ENCODE measurements at regions of chr14 and their contacts with region 1.

Region 1: GRCh38 chr14:32076278-32077080 is 625 bp upstream of the ARHGAP5 start:
- DNase-seq: peak; percentile 47 to 90 (median 75)
- ATAC-seq: peak; percentile 61
- H3K4me3 ChIP-seq: peak overlapping the region; percentile 77 to 96
- H3K4me3 Mint-ChIP-seq: peak overlapping the region; percentile 100
- H3K27ac ChIP-seq: peak overlapping the region; percentile 69 to 74
- H3K27ac Mint-ChIP-seq: peak overlapping the region; percentile 95
- H3K4me1 ChIP-seq: peaks cover 13% of the 10 kb centered on the region
- H3K4me1 Mint-ChIP-seq: peaks cover 36% of the 10 kb centered on the region
- H3K27me3 ChIP-seq: no peaks in the 10 kb centered on the region
- H3K27me3 Mint-ChIP-seq: no peaks in the 10 kb centered on the region
- CTCF ChIP-seq: no peak

Region 2: DNA sequence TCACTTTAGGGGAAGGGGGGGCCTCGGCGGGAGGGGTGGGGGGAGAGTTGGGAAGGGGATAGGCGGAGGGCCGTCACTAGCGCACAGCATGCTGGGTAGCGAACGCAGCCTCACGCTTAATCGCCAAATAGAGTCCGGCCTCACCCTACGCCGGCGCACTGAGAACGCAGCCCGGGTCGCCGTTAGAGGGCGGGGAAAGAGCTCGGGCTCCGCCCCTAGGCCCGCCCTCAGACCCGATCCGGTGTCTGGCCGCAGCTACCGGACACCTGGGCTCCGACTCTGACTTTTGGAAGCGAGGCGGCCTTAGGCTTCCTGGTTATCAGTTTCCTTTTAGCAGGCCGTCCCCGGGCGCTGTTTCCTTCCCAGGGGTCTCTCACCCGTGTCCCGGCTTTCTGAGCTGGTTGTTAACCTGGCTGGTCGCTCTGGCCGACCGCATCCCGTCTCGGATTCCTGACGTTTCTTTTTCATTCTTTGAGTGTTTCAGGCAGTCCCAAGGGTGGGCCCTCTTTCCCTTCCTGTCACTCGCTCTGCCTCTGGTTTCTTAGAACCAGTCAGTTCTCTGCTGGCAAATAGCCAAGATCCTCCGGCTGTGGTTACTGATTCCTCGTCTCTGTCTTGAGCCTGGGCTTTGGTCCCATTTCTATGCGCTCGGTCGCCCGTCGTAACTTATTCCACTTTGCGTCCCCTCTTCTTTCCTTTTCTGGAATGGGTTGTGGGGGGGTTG is 1049.9 kb before region 1 on chr14:
- CTCF ChIA-PET with region 1: no interaction called
- POLR2A ChIA-PET with region 1: no interaction called
- intact Hi-C with region 1: loop called in 1 of 2 experiments (anchors 5 kb)
- DNase-seq: peak; percentile 75 to 96 (median 88)
- ATAC-seq: peak; percentile 88
- H3K4me3 ChIP-seq: peak overlapping the region; percentile 77 to 99
- H3K4me3 Mint-ChIP-seq: peak overlapping the region; percentile 97
- H3K27ac ChIP-seq: peak overlapping the region; percentile 79 to 93
- H3K27ac Mint-ChIP-seq: peak overlapping the region; percentile 94
- H3K4me1 ChIP-seq: peaks cover 25% of the 10 kb centered on the region
- H3K4me1 Mint-ChIP-seq: peaks cover 47% of the 10 kb centered on the region
- H3K27me3 ChIP-seq: no peaks in the 10 kb centered on the region
- H3K27me3 Mint-ChIP-seq: no peaks in the 10 kb centered on the region
- CTCF ChIP-seq: no peak

Region 3: DNA sequence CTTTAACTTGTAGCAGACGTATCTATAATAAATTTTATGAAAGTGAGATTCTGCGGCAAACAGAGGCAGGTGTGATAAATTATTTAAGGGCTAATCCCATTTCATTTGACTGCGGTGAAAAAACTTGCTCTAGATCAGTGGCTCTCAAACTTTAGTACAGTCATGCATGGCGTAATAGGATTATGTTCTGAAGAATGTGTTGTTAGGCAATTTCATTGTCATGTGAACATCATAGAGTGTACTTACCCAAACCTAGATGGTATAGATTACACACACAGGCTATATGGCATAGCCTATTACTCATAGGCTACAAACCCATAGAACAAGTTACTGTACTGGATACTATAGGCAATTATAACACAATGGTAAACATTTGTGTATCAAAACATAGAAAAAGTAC is 739.8 kb before region 1 on chr14:
- CTCF ChIA-PET with region 1: no interaction called
- POLR2A ChIA-PET with region 1: no interaction called
- intact Hi-C with region 1: no loop called
- DNase-seq: no peak
- ATAC-seq: no peak
- H3K4me3 ChIP-seq: no peak overlapping the region
- H3K4me3 Mint-ChIP-seq: no peak overlapping the region
- H3K27ac ChIP-seq: no peak overlapping the region
- H3K27ac Mint-ChIP-seq: no peak overlapping the region
- H3K4me1 ChIP-seq: no peaks in the 10 kb centered on the region
- H3K4me1 Mint-ChIP-seq: no peaks in the 10 kb centered on the region
- H3K27me3 ChIP-seq: no peaks in the 10 kb centered on the region
- H3K27me3 Mint-ChIP-seq: no peaks in the 10 kb centered on the region
- CTCF ChIP-seq: no peak

Region 4: GRCh38 chr14:31456841-31457664 is 619.4 kb before region 1 on chr14 and contains the start of gene DTD2:
- CTCF ChIA-PET with region 1: no interaction called
- POLR2A ChIA-PET with region 1: interaction called, 4 read pairs
- intact Hi-C with region 1: loop called (anchors 1 kb)
- DNase-seq: peak; percentile 87 to 95 (median 92)
- ATAC-seq: peak; percentile 98
- H3K4me3 ChIP-seq: peak within 1 kb of the TSS; percentile 93 to 95
- H3K4me3 Mint-ChIP-seq: peak within 1 kb of the TSS; percentile 96
- H3K27ac ChIP-seq: peak within 1 kb of the TSS; percentile 78 to 85
- H3K27ac Mint-ChIP-seq: peak within 1 kb of the TSS; percentile 92
- H3K4me1 ChIP-seq: peaks cover 15% of the 10 kb centered on the region
- H3K4me1 Mint-ChIP-seq: peaks cover 42% of the 10 kb centered on the region
- H3K27me3 ChIP-seq: no peaks in the 10 kb centered on the region
- H3K27me3 Mint-ChIP-seq: peaks cover 2% of the 10 kb centered on the region
- CTCF ChIP-seq: no peak
- total RNA-seq, gene DTD2: 4.9 to 6.5 TPM

Region 5: DNA sequence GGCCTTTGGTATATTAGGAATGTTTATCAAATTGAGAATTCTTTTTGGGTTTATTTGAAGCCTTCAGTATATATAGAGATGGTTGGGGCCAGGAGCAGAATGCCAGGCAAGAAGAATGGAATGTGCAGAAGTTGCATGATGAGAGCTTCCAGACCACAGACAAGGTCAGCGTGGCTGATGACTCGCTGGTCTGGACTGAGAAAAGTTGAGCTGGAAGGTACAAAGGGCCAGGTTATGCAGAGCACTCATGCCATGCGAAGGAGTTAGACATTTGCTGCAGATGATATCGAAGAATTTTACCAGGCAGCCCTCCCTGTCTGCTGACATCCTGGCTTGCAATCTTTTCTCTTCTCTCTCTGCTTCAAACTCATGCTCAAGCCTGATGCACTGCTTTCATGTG is 195.5 kb before region 1 on chr14:
- CTCF ChIA-PET with region 1: no interaction called
- POLR2A ChIA-PET with region 1: no interaction called
- intact Hi-C with region 1: no loop called
- DNase-seq: no peak
- ATAC-seq: no peak
- H3K4me3 ChIP-seq: no peak overlapping the region
- H3K4me3 Mint-ChIP-seq: no peak overlapping the region
- H3K27ac ChIP-seq: no peak overlapping the region
- H3K27ac Mint-ChIP-seq: no peak overlapping the region
- H3K4me1 ChIP-seq: no peaks in the 10 kb centered on the region
- H3K4me1 Mint-ChIP-seq: no peaks in the 10 kb centered on the region
- H3K27me3 ChIP-seq: no peaks in the 10 kb centered on the region
- H3K27me3 Mint-ChIP-seq: peaks cover 2% of the 10 kb centered on the region
- CTCF ChIP-seq: no peak

Region 6: GRCh38 chr14:31968107-31968810 is 108.2 kb before region 1 on chr14:
- CTCF ChIA-PET with region 1: no interaction called
- POLR2A ChIA-PET with region 1: no interaction called
- intact Hi-C with region 1: no loop called
- DNase-seq: no peak
- ATAC-seq: no peak
- H3K4me3 ChIP-seq: no peak overlapping the region
- H3K4me3 Mint-ChIP-seq: no peak overlapping the region
- H3K27ac ChIP-seq: no peak overlapping the region
- H3K27ac Mint-ChIP-seq: no peak overlapping the region
- H3K4me1 ChIP-seq: no peaks in the 10 kb centered on the region
- H3K4me1 Mint-ChIP-seq: peaks cover 2% of the 10 kb centered on the region
- H3K27me3 ChIP-seq: no peaks in the 10 kb centered on the region
- H3K27me3 Mint-ChIP-seq: no peaks in the 10 kb centered on the region
- CTCF ChIP-seq: no peak

Region 7: GRCh38 chr14:32102152-32102787 is 25.8 kb after region 1 on chr14:
- CTCF ChIA-PET with region 1: no interaction called
- POLR2A ChIA-PET with region 1: no interaction called
- intact Hi-C with region 1: loop called in 1 of 2 experiments (anchors 2 kb)
- DNase-seq: peak in 2 of 9 experiments; percentile 11 to 18
- ATAC-seq: peak; percentile 82
- H3K4me3 ChIP-seq: no peak overlapping the region
- H3K4me3 Mint-ChIP-seq: peak overlapping the region; percentile 44
- H3K27ac ChIP-seq: peak overlapping the region in 1 of 2 experiments; percentile 1
- H3K27ac Mint-ChIP-seq: peak overlapping the region; percentile 84
- H3K4me1 ChIP-seq: peaks cover 15% of the 10 kb centered on the region
- H3K4me1 Mint-ChIP-seq: peaks cover 41% of the 10 kb centered on the region
- H3K27me3 ChIP-seq: no peaks in the 10 kb centered on the region
- H3K27me3 Mint-ChIP-seq: no peaks in the 10 kb centered on the region
- CTCF ChIP-seq: no peak

Region 8: DNA sequence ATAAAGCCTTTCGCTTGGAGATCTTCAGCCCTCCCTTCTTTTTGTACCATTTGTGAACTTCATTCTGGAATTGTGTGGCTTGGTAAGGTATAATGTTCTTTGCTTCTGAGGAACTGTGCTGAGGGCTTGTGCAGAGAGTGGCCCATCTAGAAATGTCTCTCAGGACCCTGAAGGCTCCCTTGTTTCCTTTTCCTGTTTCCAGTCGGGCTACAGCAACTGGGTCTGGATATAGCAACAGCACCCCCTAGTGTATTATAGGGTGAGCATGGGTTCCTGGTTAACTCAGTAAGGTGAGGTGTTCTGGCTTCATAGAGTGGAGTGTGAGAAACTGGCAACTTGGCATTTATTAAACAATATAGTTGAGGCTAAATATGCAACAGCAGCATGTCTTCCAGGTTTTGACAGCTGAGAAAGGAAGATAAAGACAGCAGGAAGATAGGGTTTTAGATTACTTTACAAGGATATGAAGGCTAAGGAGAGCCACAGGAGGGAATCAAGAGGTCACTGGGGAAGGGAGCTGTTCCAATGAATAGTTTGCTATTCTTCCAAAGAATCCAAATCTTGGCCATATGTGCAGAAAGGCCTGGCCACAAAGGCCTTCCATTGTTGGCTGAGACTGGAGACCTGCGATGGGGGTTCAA is 175.7 kb after region 1 on chr14:
- CTCF ChIA-PET with region 1: interaction called, 247 read pairs
- POLR2A ChIA-PET with region 1: interaction called, 6 read pairs
- intact Hi-C with region 1: loop called (anchors 1 kb)
- DNase-seq: peak in 8 of 9 experiments; percentile 3 to 78 (median 46)
- ATAC-seq: peak; percentile 90
- H3K4me3 ChIP-seq: no peak overlapping the region
- H3K4me3 Mint-ChIP-seq: no peak overlapping the region
- H3K27ac ChIP-seq: no peak overlapping the region
- H3K27ac Mint-ChIP-seq: no peak overlapping the region
- H3K4me1 ChIP-seq: no peaks in the 10 kb centered on the region
- H3K4me1 Mint-ChIP-seq: no peaks in the 10 kb centered on the region
- H3K27me3 ChIP-seq: no peaks in the 10 kb centered on the region
- H3K27me3 Mint-ChIP-seq: no peaks in the 10 kb centered on the region
- CTCF ChIP-seq: peak; percentile 87

Measured in CD8-positive, alpha-beta T cell (primary cell).